Activated naive CD4-positive, alpha-beta T cell treated with anti-CD3 and anti-CD28 coated beads, Interleukin-2, amount 10 ng/mL, durations not matched to agents 7 days and 5 days (primary cell): ENCODE measurements at regions of chr6 and their contacts with region 1.

Region 1: GRCh38 chr6:2791124-2791974 is 26.2 kb downstream of the WRNIP1 start:
- DNase-seq: peak; percentile 76
- H3K4me3 Mint-ChIP-seq: no peak overlapping the region
- H3K27ac Mint-ChIP-seq: no peak overlapping the region
- H3K4me1 Mint-ChIP-seq: peaks cover 32% of the 10 kb centered on the region
- H3K27me3 Mint-ChIP-seq: no peaks in the 10 kb centered on the region

Region 2: GRCh38 chr6:2575236-2575635 is 216.1 kb before region 1 on chr6:
- CTCF ChIA-PET with region 1: no interaction called
- DNase-seq: no peak
- H3K4me3 Mint-ChIP-seq: no peak overlapping the region
- H3K27ac Mint-ChIP-seq: no peak overlapping the region
- H3K4me1 Mint-ChIP-seq: no peaks in the 10 kb centered on the region
- H3K27me3 Mint-ChIP-seq: peaks cover 38% of the 10 kb centered on the region

Region 3: DNA sequence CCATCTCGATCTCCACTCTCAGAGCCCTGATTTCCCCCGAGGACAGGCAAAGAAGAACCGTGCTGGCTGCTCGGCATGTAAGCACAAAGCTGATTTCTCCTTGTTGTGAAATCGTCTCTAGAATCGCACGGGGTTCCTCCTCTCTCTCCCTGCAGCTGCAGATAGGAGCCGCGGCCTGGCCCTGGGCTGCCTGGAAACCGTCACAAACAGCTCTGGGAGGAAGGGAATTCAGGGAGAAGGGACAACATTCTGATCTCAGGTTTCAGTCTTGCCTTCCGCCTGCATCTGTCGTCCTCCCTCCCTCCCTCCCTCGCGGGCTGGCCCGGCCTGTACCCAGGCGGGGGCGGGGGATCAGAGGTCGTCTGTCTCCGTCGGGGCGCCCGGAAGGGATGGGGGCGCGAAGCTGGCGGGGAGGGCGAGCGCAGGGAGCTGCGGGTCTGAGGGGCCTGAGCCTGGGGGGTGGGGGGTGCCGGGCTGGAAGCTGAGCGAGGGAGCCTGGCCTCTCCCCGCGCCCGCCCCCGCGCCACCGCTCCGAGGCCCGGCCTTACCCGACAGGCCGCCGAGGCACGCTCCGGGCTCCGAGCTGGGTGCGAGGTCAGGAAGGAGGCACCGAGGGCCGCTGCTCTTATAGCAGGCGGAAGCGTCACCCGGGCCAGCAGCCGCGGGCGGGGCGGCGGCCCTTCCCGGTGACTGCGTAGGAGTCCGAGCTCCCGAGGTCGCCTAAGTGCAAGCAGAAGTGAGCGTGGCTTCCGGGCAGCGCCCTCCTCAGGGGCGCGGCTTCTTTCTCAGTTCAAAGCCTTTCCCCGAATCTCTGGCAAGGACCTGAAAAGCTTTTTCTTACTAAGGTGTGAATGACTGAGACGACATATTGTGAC is 50.2 kb after region 1 on chr6 and contains the start of gene SERPINB1:
- CTCF ChIA-PET with region 1: interaction called, 65 read pairs
- DNase-seq: peak; percentile 84
- H3K4me3 Mint-ChIP-seq: peak within 1 kb of the TSS; percentile 85
- H3K27ac Mint-ChIP-seq: peak within 1 kb of the TSS; percentile 84
- H3K4me1 Mint-ChIP-seq: peaks cover 61% of the 10 kb centered on the region
- H3K27me3 Mint-ChIP-seq: no peaks in the 10 kb centered on the region

Region 4: DNA sequence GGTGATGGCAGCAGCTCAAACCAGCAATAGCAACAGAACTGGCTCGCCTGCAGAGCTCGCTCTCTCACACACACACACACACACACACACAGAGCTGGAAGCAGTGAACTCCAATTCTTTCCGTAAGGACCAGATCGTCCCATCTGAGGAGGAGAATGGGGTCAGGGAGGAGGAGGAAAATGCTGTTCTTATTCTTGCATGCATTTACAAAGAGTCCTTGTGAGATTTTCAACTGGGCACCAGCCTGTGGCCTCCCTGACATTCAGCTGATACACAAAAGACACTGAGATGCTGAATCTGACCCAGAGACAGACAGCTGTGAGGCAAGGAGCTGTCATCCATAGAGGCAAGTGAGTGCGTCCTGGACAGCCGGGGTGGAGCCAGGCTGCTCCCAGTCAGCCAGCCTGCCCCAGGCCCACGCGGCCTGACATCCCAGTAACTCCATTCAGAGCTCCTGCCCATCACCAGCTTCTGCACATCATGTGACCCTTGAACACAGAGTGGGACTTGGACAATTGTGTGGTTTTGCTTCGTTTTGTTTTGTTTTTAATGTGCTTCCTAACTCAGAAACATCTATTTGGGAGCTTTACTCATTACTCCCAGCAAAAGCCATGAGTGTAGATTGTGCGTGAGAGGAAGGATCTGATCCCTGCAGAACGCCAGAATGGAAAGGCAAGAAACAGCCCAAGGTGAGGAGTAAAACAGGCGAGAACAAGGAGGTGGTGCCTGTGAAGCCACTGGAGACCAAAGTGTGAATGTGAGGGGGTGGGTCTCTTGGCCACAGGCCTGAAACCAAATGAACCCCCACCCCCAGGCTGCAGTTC is 109.7 kb after region 1 on chr6:
- CTCF ChIA-PET with region 1: interaction called, 10 read pairs
- DNase-seq: no peak
- H3K4me3 Mint-ChIP-seq: peak overlapping the region; percentile 100
- H3K27ac Mint-ChIP-seq: peak overlapping the region; percentile 86
- H3K4me1 Mint-ChIP-seq: peaks cover 60% of the 10 kb centered on the region
- H3K27me3 Mint-ChIP-seq: peaks cover 16% of the 10 kb centered on the region

Region 5: DNA sequence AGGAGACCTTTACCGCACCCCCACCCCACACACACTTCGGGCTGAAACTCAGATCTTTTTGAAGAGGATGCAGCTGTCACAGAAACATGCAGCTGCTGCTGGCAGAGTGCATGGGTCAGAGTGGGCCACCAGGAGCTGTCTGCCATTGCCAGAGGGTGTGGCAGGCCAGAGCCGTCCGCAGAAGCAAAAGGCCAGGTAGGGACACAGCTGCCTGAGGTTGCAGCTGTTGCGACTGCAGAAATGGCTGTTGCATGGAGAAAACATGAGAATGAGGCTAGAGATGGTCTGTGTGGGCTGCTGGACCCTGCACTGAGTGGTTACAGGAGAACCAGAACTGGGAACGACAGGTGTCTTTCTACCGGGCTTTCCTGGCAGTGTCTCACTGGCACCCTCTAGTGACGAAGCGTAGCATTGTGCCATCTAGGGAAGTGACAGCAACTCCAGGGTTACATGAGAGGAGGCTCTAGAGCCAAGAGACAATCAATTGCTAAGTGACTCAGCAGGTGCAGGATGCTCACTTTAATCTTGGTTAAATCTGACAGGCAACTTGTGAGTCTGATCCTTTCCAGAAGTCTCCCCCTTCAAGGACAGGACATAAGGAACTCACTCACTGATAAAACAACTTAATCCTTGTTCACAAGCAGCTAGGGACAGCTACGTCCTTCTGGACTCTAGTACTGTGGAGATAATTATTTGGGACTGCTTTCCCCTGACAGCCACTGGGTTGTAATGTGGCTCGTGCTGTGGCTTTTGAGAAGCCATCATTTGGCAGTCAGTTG is 140.8 kb after region 1 on chr6:
- CTCF ChIA-PET with region 1: interaction called, 38 read pairs
- DNase-seq: peak; percentile 92
- H3K4me3 Mint-ChIP-seq: no peak overlapping the region
- H3K27ac Mint-ChIP-seq: peak overlapping the region; percentile 49
- H3K4me1 Mint-ChIP-seq: peaks cover 24% of the 10 kb centered on the region
- H3K27me3 Mint-ChIP-seq: peaks cover 8% of the 10 kb centered on the region

Region 6: GRCh38 chr6:2988426-2989331 is 197.3 kb after region 1 on chr6:
- CTCF ChIA-PET with region 1: interaction called, 39 read pairs
- DNase-seq: peak; percentile 84
- H3K4me3 Mint-ChIP-seq: peak overlapping the region; percentile 90
- H3K27ac Mint-ChIP-seq: peak overlapping the region; percentile 98
- H3K4me1 Mint-ChIP-seq: peaks cover 32% of the 10 kb centered on the region
- H3K27me3 Mint-ChIP-seq: peaks cover 16% of the 10 kb centered on the region